Left cardiac atrium (tissue), 4 donors: ENCODE measurements at regions of chr2 and their contacts with region 1.

Region 1: GRCh38 chr2:165874445-165875039 is 79.0 kb downstream of the TTC21B start:
- DNase-seq: no peak
- ATAC-seq: peak; percentile 71 to 72

Region 2: GRCh38 chr2:164992818-164993217 is 881.7 kb before region 1 on chr2:
- intact Hi-C with region 1: loop called in 1 of 2 experiments (anchors 10 kb)
- DNase-seq: peak; percentile 46
- ATAC-seq: peak; percentile 75

Region 3: GRCh38 chr2:165582409-165582808 is 292.1 kb before region 1 on chr2:
- intact Hi-C with region 1: no loop called
- DNase-seq: peak; percentile 24
- ATAC-seq: peak; percentile 19 to 51

Region 4: GRCh38 chr2:165720511-165720910 is 154.0 kb before region 1 on chr2:
- intact Hi-C with region 1: no loop called
- DNase-seq: no peak
- ATAC-seq: no peak